WTC11 (cell line): ENCODE measurements at regions of chr2 and their contacts with region 1.

Region 1: DNA sequence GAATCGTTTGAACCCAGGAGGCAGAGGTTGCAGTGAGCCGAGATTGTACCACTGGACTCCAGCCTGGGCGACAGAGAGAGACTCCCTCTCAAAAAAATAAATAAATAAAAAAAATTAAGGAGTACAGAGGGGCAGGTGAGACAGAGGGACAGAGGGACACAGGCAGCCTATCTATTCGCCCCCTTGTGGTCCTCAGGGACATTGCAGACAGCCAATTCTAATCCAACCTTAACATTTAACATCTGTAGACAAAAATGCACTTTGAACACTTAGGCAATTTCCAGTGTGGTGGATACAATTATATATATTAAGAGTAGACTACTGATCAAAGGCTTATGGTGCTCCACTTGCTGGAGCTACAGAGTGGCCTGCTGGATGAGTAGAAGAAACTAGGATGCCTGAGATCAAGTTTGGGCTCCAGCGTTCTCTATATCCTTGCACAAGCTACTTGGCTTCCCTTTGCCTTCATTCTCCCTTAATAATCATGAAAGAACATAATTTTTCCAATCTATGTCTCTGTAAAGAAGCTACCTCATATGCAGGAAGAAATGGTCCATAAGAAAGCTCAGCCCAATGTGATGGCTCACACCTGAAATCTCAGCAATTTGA is 8.2 kb upstream of the SMARCAL1 start:
- DNase-seq: peak; percentile 56
- ATAC-seq: peak; percentile 60
- H3K4me3 Mint-ChIP-seq: no peak overlapping the region
- H3K27ac Mint-ChIP-seq: no peak overlapping the region
- H3K4me1 Mint-ChIP-seq: peaks cover 28% of the 10 kb centered on the region
- H3K27me3 Mint-ChIP-seq: no peaks in the 10 kb centered on the region; the same call in 1 of the 2 replicates
- CTCF ChIP-seq: peak; percentile 94

Region 2: DNA sequence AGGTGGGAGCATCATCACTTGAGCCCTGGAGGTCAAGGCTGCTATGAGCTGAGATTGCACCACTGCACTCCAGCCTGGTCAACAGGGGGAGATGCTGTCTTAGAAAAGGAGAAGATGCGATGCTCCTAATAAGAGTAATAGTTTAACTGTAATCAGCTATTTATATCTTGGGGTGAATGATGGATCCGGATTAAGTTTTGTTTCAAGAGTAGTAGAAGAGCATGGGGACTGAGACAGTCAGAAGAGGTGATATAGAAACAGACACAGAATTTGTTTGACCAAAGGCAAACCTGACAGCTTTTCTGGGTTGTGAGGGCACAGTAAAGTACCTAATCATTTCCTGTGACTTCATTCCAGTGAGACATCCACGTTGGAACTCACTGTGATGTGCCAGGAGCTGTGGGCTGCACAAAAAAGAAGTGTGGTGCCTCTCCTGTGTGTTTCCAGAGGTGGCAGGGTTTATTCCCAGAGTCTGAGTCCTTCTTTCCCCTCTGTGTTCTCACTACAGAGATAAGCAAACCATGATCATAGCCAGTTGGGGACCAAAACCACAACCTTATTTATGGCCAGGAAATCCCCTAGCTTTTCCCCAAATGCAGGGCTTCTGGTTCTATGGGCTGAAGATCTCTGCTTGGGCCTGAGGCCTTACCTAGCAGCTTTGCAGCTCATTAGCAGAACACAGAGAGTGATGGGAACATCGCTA is 181.3 kb before region 1 on chr2:
- CTCF ChIA-PET with region 1: interaction called, 41 read pairs
- POLR2A ChIA-PET with region 1: no interaction called
- DNase-seq: peak; percentile 23
- ATAC-seq: peak; percentile 77
- H3K4me3 Mint-ChIP-seq: no peak overlapping the region
- H3K27ac Mint-ChIP-seq: no peak overlapping the region
- H3K4me1 Mint-ChIP-seq: no peaks in the 10 kb centered on the region; the same call in 1 of the 2 replicates
- H3K27me3 Mint-ChIP-seq: no peaks in the 10 kb centered on the region
- CTCF ChIP-seq: peak; percentile 15; the same call in 1 of the 2 replicates